ENCODE measurements at regions of chr11 and their contacts with region 1.

Region 1: GRCh38 chr11:102666331-102666957 is 39.1 kb downstream of the MMP27 start:
- H3K4me3 ChIP-seq: no peak overlapping the region
- H3K27ac ChIP-seq: no peak overlapping the region
- H3K4me1 ChIP-seq: no peaks in the 10 kb centered on the region
- CTCF ChIP-seq: peak; percentile 30; the same call in 1 of the 2 replicates

Region 2: GRCh38 chr11:102287964-102288724 is 378.3 kb before region 1 on chr11:
- CTCF ChIA-PET with region 1: interaction called, 23 read pairs
- POLR2A ChIA-PET with region 1: no interaction called
- H3K4me3 ChIP-seq: no peak overlapping the region
- H3K27ac ChIP-seq: no peak overlapping the region
- H3K4me1 ChIP-seq: no peaks in the 10 kb centered on the region
- CTCF ChIP-seq: peak; percentile 42; the same call in 1 of the 2 replicates

Region 3: GRCh38 chr11:102495161-102496042 is 171.0 kb before region 1 on chr11:
- CTCF ChIA-PET with region 1: interaction called, 16 read pairs
- POLR2A ChIA-PET with region 1: no interaction called
- H3K4me3 ChIP-seq: no peak overlapping the region
- H3K27ac ChIP-seq: no peak overlapping the region
- H3K4me1 ChIP-seq: no peaks in the 10 kb centered on the region
- CTCF ChIP-seq: no peak

Region 4: DNA sequence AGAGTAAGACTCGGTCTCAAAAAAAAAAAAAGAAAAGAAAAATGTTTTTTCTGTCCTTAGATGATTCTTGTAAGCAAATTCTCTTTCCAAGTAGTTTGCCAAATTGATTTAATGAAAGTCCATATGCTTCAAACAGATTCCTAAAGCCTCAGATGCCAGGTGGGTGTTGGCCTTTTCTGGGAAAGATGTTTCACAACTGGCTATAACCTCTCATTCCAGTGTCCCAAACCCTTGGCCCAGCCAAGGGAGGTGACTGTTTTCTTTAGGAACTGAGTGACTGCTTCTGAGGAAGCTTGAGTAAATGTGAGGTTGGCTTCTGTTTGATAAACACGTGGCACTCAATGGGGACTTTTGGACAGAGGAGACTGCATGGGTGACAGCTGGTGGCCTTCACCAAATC is 11.6 kb after region 1 on chr11:
- CTCF ChIA-PET with region 1: interaction called, 11 read pairs
- POLR2A ChIA-PET with region 1: no interaction called
- H3K4me3 ChIP-seq: no peak overlapping the region
- H3K27ac ChIP-seq: no peak overlapping the region
- H3K4me1 ChIP-seq: no peaks in the 10 kb centered on the region
- CTCF ChIP-seq: no peak